ENCODE measurements at regions of chr2 and their contacts with region 1.

Region 1: DNA sequence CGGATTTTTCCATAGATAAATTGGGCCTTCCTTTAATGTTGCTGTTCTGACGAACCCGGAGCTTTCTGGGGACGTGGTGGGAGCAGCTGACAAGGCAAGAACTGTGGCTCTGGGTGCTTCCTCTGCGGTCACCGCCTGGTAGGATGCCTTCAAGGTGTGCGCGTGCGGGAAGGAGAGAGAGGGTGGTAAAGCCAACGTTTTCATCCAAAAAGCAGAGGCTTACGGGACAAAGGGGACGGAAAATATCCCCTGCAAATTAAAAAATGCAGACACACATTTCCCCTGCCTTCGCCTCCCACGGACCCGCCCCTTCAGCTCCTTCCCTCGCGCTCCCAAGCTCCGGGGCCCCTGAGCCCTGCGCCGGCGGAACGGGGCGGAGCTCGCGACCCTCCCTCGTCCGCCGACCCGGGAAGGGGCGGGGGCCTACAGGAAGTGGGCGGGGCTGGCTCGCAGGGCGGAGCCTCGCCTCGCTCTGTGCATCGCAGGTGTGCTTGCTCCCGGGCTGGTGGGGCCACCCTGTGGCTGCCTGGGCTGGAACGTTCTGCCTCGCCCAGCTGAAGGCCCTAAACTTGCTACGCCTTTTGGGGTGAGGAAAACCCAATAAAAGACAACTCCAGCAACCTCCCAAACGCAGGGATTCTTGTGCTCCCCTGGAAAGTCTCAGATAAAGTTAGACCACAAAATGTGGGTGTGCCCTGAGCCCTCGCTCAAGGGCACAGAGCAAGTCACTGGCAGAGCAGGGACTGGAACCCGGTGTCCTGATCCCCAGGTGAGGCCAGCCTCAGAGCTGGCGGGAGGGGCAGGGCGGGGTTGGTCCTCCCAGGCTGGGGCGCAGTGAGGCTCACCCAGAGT is 25.4 kb upstream of the SLC66A3 start:
- DNase-seq: peak; percentile 88
- H3K4me3 Mint-ChIP-seq: peak overlapping the region; percentile 62
- H3K27ac Mint-ChIP-seq: peak overlapping the region; percentile 33
- H3K4me1 Mint-ChIP-seq: peaks cover 28% of the 10 kb centered on the region
- H3K27me3 Mint-ChIP-seq: no peaks in the 10 kb centered on the region

Region 2: GRCh38 chr2:10750610-10751009 is 379.2 kb before region 1 on chr2:
- CTCF ChIA-PET with region 1: no interaction called
- POLR2A ChIA-PET with region 1: no interaction called
- intact Hi-C with region 1: loop called (anchors 1 kb)
- DNase-seq: no peak
- H3K4me3 Mint-ChIP-seq: no peak overlapping the region
- H3K27ac Mint-ChIP-seq: no peak overlapping the region
- H3K4me1 Mint-ChIP-seq: peaks cover 7% of the 10 kb centered on the region
- H3K27me3 Mint-ChIP-seq: no peaks in the 10 kb centered on the region

Region 3: GRCh38 chr2:11142345-11142744 is 12.5 kb after region 1 on chr2:
- CTCF ChIA-PET with region 1: interaction called, 18 read pairs
- POLR2A ChIA-PET with region 1: interaction called, 4 read pairs
- intact Hi-C with region 1: no loop called
- DNase-seq: no peak
- H3K4me3 Mint-ChIP-seq: no peak overlapping the region
- H3K27ac Mint-ChIP-seq: no peak overlapping the region
- H3K4me1 Mint-ChIP-seq: no peaks in the 10 kb centered on the region
- H3K27me3 Mint-ChIP-seq: peaks cover 8% of the 10 kb centered on the region

Region 4: GRCh38 chr2:11344342-11344955 is 214.6 kb after region 1 on chr2 and contains the start of gene ROCK2:
- CTCF ChIA-PET with region 1: interaction called, 12 read pairs
- POLR2A ChIA-PET with region 1: no interaction called
- intact Hi-C with region 1: no loop called
- DNase-seq: peak; percentile 80
- H3K4me3 Mint-ChIP-seq: peak within 1 kb of the TSS; percentile 98
- H3K27ac Mint-ChIP-seq: peak within 1 kb of the TSS; percentile 89
- H3K4me1 Mint-ChIP-seq: peaks cover 27% of the 10 kb centered on the region
- H3K27me3 Mint-ChIP-seq: no peaks in the 10 kb centered on the region
- total RNA-seq, gene ROCK2: 16.6 to 19.2 TPM

Region 5: GRCh38 chr2:11465497-11466406 is 335.9 kb after region 1 on chr2 and contains the start of gene E2F6:
- CTCF ChIA-PET with region 1: interaction called, 14 read pairs
- POLR2A ChIA-PET with region 1: no interaction called
- intact Hi-C with region 1: no loop called
- DNase-seq: peak; percentile 92
- H3K4me3 Mint-ChIP-seq: peak within 1 kb of the TSS; percentile 91
- H3K27ac Mint-ChIP-seq: peak within 1 kb of the TSS; percentile 83
- H3K4me1 Mint-ChIP-seq: peaks cover 36% of the 10 kb centered on the region
- H3K27me3 Mint-ChIP-seq: no peaks in the 10 kb centered on the region
- total RNA-seq, gene E2F6: 9.9 to 10.3 TPM

Region 6: DNA sequence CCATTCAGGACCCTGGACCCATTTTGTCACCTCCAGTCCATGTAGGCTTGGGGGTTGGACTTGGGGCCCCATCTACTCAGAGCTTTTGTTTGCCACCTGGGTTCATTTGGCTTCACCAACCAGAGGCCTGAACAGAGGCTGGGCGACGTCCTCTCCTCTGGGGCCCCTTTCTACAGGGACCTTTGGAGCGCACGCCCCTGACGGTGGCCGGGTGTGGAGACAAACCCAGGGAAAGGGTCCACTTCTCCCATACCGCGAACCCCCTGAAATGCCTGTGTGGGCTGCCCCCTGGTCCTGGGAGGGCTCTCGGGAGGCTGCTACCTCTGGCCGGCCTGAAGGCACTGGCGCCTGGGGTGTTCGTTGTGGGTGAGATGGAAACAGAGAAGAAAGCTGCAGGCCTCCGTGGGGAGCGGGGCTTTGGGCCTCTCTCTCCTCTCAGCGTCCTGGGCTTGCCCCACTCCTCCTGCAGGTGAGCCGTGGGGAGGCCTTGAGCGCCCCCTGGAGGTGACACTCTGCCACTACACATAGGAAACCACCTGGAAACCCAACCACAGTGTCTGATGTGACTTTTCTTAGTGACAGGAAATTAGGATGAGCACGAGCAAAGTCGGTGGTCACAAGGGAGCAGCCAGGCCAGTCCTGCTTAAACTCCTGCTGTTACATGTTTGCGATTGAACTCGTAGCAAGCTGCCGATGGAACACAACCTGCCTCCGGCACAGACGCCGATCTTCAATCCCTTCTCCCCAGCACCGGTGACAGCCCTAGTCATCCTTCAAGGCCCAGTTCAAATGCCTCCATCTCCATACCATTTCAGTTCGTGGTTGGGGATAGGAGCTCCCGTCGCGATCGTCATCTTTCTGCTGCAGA is 552.1 kb after region 1 on chr2:
- CTCF ChIA-PET with region 1: interaction called, 4 read pairs
- POLR2A ChIA-PET with region 1: no interaction called
- intact Hi-C with region 1: loop called (anchors 2 kb)
- DNase-seq: peak; percentile 77
- H3K4me3 Mint-ChIP-seq: no peak overlapping the region
- H3K27ac Mint-ChIP-seq: no peak overlapping the region
- H3K4me1 Mint-ChIP-seq: peaks cover 5% of the 10 kb centered on the region
- H3K27me3 Mint-ChIP-seq: peaks cover 26% of the 10 kb centered on the region

Measured in activated CD4-positive, alpha-beta memory T cell treated with anti-CD3 and anti-CD28 coated beads for 36 hours (primary cell).